ENCODE measurements at regions of chr19 and their contacts with region 1.

Region 1: GRCh38 chr19:36060430-36060829 is 5.7 kb downstream of the WDR62 start:
- DNase-seq: peak; percentile 63
- CTCF ChIP-seq: peak; percentile 72

Region 2: DNA sequence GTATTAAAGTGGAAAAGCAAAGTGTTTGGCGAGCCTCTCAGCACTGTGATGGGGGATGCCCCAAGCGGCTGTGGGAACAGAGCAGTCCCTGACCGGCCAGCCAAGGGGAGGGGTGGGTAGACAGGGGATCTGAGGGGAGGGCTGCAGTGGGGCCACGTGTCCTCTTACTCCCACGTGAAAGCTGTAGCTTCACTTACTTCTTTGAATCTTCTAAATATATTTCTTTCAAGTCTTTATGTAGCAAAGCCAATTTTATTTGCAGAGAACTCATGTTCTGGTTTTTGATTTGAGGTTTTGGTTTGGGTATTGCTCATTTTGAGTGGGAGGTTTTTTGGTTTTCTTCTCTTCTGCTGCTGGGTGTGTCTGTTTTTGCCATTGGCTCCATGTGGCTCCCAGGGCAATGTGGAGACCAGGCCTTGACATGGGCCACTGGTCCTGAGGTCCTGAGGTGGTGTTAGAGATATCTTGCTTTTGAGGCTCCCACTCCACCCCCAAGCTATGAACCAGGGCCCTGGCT is 32.8 kb after region 1 on chr19:
- CTCF ChIA-PET with region 1: interaction called, 15 read pairs
- POLR2A ChIA-PET with region 1: no interaction called
- DNase-seq: peak; percentile 82
- CTCF ChIP-seq: no peak

Region 3: GRCh38 chr19:36169084-36169760 is 108.8 kb after region 1 on chr19:
- CTCF ChIA-PET with region 1: interaction called, 21 read pairs
- POLR2A ChIA-PET with region 1: no interaction called
- DNase-seq: no peak
- CTCF ChIP-seq: no peak

Measured in GM10248 (cell line).